Right ventricle myocardium superior (tissue), 1 donor: ENCODE measurements at regions of chr4 and their contacts with region 1.

Region 1: GRCh38 chr4:64584981-64585557 is 175.8 kb upstream of the TECRL start:
- DNase-seq: no peak
- ATAC-seq: no peak

Region 2: DNA sequence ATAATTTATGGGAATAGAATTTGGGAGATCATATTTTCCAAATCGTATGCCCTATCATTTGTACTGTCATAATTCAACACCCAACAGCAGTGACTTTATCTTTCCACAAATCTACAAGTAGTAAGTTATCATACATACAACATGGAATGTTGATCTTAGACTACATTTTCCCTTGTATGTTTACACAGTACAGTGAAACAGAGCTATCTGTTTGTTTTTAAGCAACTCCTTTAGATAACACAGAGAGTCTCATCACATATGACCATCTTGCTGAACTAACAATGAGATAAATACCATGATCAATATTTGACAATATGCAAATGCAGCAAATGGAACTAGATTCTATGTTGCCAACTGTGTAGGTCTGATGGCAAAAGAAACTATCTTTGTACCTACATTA is 422.0 kb before region 1 on chr4:
- intact Hi-C with region 1: loop called (anchors 10 kb)
- DNase-seq: no peak
- ATAC-seq: no peak

Region 3: DNA sequence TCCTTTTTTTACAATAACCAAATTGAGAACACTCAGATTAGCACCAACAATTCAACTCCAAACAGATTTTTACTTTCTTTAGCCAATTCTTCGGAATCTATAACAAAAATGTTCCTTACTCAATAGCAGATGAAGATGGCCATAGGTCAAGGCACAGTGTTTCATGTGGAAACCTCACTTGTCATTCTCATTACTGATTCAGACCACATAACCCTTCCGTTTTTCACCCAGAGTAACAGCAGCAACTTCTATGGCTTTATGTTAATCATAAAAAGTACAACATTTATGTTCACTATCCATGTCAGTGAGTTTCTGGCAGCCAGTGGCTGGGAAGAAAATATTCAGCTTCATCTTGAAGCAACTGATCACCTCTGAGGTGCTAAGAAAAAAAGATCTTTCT is 182.5 kb after region 1 on chr4:
- intact Hi-C with region 1: no loop called
- DNase-seq: no peak
- ATAC-seq: no peak